Dorsolateral prefrontal cortex (tissue), 120 donors: ENCODE measurements at regions of chr3 and their contacts with region 1.

Region 1: DNA sequence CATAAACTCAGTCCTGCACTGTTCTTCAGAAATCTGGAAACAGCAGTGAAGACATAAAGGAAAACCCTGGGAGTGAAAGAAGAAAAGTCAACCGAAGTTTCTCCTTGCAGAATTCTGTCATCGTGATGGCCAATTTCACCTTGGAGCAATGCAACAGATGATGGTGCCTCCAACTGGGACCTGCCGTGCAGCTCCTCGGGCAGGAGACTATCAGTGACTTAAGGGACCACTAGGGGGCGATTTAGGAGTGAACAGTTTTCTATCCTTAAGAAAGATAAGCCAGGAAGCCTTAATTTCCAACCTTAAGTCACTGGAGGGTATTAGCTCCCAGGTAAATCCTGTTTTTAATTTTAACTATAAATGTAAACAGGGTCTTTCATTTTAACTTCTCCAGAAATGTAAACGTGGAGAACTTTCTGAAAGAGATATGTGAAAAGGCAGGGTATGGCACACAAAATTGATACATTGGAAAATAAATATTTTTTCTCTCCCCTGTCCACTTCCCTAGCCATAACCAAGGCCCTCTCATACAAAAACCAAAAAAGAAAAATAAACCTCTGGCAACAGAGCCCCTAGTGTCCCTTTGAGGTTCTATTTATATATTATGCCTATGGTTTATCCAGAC is 116.3 kb downstream of the PDZRN3 start:
- DNase-seq: peak in 3 of 10 donors; percentile 24 to 60 (median 41)
- H3K4me3 ChIP-seq: no peak overlapping the region
- H3K27ac ChIP-seq: peak overlapping the region in 19 of 59 donors; percentile 1 to 76 (median 49)
- H3K27me3 ChIP-seq: no peaks in the 10 kb centered on the region
- CTCF ChIP-seq: peak; percentile 76 to 91 (median 84)

Region 2: DNA sequence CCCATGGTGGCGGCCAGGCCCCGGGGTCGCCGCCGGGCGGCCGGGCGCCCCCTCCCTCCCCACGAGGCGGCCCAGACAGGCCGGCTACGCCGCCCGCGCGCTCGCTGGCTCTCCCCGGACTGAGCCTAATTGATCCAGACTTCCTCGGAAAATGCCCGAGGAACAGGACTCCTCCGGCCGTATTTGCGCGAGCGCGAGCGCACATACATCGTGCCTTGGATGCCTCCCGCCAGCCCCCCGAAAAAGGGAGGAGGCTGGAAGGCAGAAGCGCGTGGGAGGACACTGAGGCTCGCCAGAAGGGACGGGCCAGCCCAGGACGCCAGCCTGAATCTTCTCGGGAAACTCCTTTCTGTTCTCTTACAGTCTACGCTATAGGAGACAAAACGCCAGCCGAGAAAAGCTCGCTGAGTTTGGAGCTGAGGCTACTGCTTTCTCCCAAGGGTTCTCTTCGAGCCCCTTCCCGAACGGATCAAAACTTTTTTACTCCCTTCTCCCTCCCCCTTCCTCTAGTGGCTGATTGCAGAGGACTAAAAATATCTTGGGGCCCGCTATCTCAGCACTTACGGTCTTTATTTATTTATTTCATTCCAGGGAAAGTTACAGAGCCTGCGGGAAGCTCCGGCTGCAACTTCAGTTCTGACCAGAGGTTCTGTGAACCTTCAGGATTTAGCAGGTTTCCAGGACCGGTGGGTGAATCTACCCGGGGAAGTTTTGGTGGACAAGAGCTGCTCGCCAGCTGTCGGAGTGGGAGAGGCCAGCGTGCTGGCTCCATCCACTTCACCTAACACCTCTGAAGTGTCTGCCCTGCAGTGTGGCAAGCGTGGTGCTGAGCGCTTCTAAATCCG is 116.6 kb after region 1 on chr3 and contains the start of gene PDZRN3:
- intact Hi-C with region 1: loop called in 1 of 2 experiments (anchors 5 kb)
- DNase-seq: peak in 9 of 10 donors; percentile 23 to 66 (median 48)
- H3K4me3 ChIP-seq: peak within 1 kb of the TSS; percentile 27 to 80 (median 65)
- H3K27ac ChIP-seq: peak within 1 kb of the TSS in 49 of 59 donors; percentile 16 to 88 (median 66)
- H3K27me3 ChIP-seq: no peaks in the 10 kb centered on the region
- CTCF ChIP-seq: no peak
- total RNA-seq, gene PDZRN3: 16.4 to 67.3 (median 42.1) TPM

Region 3: DNA sequence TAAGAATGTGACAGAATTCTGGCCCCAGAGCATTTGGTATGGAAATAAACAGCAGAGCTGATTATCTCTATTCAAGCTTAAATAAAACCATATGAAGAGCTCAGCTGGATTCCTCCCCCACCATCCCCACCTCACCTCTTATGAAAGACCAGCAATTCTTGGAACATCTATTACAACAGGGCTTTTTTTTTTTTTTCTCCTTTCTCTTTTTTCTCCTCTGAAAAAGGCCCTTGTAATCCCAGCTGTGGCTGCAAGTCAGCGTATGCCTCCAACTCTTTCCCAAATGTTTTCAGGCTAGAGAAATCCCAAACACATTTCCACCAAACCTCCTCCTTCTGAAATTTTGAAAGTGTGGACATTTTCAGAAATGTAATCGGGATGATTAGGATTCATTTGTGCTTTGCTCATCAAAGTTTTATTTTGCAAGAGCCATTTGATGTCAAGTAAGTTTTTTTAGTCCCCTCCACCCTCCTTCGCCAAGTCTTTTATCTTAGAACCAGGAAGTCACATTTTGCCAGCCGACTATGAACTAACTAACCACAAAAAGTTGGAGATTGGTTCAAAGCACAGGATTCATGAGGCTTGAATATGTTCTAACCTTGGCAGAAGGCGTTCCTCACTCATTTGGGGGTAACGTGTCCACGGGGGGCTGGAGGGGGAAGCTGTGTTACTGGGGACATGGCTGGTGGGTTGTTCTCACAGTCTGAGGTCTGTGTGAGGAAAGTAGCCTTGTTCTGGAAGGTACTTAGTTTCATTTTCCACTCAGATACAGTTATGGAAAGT is 258.3 kb after region 1 on chr3:
- intact Hi-C with region 1: loop called (anchors 5 kb)
- DNase-seq: no peak
- H3K4me3 ChIP-seq: peak overlapping the region in 49 of 59 donors; percentile 3 to 56 (median 28)
- H3K27ac ChIP-seq: peak overlapping the region in 45 of 59 donors; percentile 2 to 77 (median 42)
- H3K27me3 ChIP-seq: no peaks in the 10 kb centered on the region
- CTCF ChIP-seq: no peak

Region 4: GRCh38 chr3:73848173-73848906 is 339.9 kb after region 1 on chr3:
- intact Hi-C with region 1: loop called (anchors 2 to 5 kb)
- DNase-seq: no peak
- H3K4me3 ChIP-seq: no peak overlapping the region
- H3K27ac ChIP-seq: no peak overlapping the region
- H3K27me3 ChIP-seq: no peaks in the 10 kb centered on the region
- CTCF ChIP-seq: peak; percentile 59 to 91 (median 77)